Endothelial cell of umbilical vein (primary cell): ENCODE measurements at regions of chr1 and their contacts with region 1.

Region 1: GRCh38 chr1:108643492-108644335 is 17.2 kb downstream of the HENMT1 start:
- DNase-seq: peak; percentile 78
- H3K4me3 ChIP-seq: no peak overlapping the region
- H3K27ac ChIP-seq: no peak overlapping the region
- H3K4me1 ChIP-seq: no peaks in the 10 kb centered on the region
- H3K27me3 ChIP-seq: no peaks in the 10 kb centered on the region
- CTCF ChIP-seq: peak; percentile 29 to 36
- POLR2A ChIP-seq: no peak

Region 2: DNA sequence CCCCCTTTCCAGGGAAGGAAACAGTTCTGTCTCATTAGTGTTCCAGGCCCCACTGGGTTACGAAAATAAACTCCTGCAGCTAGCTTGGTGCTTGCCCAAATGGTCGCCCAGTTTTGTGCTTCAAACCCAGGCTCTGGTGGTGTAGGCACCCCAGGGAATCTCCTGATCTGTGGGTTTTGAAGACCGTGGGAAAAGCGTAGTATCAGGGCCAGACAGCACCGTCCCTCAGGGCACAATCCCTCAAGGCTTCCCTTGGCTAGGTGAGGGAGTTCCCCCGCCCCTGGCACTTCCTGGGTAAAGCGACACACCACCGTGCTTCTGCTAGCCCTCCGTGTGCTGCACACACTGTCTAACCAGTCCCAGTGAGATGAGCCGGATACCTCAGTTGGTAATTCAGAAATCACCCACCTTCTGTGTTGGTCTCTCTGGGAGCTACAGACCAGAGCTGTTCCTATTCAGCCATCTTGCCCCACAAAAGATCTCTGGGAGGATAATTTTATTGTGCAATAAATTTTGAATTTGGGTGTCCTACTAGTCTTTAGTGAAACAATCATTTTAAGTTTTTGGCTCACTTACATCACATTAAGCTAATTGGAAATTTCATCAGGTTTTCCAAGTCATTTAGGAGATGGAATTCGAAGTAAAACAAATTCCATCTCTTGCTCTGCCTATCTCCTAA is 434.1 kb before region 1 on chr1:
- CTCF ChIA-PET with region 1: interaction called, 10 read pairs
- POLR2A ChIA-PET with region 1: no interaction called
- dilution Hi-C with region 1: no loop called
- intact Hi-C with region 1: no loop called
- DNase-seq: no peak
- H3K4me3 ChIP-seq: no peak overlapping the region
- H3K27ac ChIP-seq: no peak overlapping the region
- H3K4me1 ChIP-seq: peaks cover 3% of the 10 kb centered on the region
- H3K27me3 ChIP-seq: peaks cover 6 to 20% of the 10 kb centered on the region in 2 experiments
- CTCF ChIP-seq: no peak
- POLR2A ChIP-seq: no peak

Region 3: DNA sequence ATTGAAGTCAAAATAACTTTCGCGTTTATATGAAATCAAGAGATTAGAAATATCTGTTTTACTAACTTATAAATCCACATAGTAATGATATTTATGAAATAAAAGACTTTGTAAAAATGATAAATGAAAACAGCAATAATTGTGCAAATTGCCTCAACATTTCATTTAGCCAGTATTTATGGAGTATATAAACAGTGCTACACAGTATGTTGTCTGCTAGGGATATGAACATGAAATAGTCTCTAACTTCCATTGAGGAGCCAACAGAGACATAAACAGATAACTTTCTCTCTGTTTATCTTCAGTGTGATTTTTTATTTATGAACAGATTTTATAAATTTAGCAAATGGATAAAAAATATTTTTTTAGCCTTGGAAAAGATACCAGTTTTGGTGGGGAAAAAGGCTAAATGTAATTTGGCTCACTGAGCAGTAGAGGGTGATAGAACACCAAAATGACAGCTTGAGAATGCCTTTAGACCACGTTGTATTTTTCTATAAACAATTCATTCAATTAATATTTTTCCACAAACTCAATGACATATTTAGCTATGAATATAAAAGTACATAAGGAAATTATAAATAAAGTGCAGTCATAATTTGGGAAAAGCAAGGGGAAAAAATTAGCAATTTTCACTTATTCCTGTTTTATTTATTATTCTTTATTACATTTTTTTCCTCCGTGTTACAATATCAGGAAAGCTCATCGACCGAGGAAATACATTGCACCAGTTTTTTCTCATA is 131.3 kb before region 1 on chr1:
- CTCF ChIA-PET with region 1: interaction called, 340 read pairs
- POLR2A ChIA-PET with region 1: no interaction called
- dilution Hi-C with region 1: no loop called
- intact Hi-C with region 1: loop called (anchors 1 kb)
- DNase-seq: peak; percentile 39
- H3K4me3 ChIP-seq: no peak overlapping the region
- H3K27ac ChIP-seq: no peak overlapping the region
- H3K4me1 ChIP-seq: no peaks in the 10 kb centered on the region
- H3K27me3 ChIP-seq: peaks cover 2 to 9% of the 10 kb centered on the region in 2 experiments
- CTCF ChIP-seq: peak; percentile 43 to 53
- POLR2A ChIP-seq: no peak

Region 4: DNA sequence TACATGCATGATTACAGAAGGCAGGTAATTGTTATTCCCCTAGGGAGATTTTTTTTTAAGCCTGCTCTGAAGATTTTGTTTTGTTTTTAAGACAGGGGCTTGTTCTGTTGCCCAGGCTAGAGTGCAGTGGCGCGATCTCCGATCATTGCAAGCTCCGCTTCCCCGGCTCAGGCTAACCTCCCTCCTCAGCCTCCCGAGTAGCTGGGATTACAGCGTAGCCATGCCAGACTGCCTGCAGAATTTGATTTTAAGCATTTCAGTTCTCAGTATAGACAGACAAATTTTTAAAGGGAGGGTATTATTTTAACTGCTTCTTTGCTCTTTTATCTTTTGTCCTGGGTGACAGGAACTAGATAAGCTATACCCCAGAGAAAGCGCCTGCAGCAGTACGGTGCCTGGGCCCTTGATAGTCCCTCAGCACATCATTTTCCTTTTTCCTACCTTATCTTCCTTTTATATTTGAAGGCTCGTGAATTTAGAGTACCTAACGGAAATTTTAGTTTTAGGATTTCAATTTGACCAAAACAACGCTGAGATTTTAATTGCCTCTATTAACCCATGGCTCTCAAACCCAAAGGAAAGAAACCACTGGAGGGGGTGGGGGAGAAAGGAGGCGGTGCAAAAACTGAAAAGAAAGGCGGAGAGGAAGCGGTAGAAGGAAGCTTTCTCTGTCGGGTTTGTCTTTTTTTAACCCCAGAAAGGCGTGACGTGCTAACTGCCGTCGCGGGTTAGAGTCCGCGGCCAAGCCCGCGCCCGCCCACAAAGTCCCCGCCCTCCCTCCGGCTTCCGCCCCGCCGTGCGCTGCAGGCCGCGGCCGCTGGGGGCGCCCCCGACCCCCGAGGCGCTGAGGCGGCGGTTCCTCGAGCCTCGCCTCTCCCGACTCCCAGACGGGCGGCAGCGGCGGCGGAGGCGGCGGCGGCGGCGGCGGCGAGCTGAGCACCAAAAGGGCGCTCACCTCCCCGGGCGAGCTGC is 84.2 kb before region 1 on chr1 and contains the start of gene EEIG2:
- CTCF ChIA-PET with region 1: interaction called, 106 read pairs
- POLR2A ChIA-PET with region 1: no interaction called
- dilution Hi-C with region 1: no loop called
- intact Hi-C with region 1: loop called (anchors 1 kb)
- DNase-seq: peak; percentile 88
- H3K4me3 ChIP-seq: peak within 1 kb of the TSS; percentile 45 to 76 (median 53)
- H3K27ac ChIP-seq: peak within 1 kb of the TSS; percentile 33
- H3K4me1 ChIP-seq: peaks cover 25% of the 10 kb centered on the region
- H3K27me3 ChIP-seq: peaks cover 3 to 11% of the 10 kb centered on the region in 2 experiments
- CTCF ChIP-seq: peak; percentile 64 to 78
- POLR2A ChIP-seq: peak; percentile 41
- total RNA-seq, gene EEIG2: 7.2 and 8.7 TPM in 2 replicates

Region 5: DNA sequence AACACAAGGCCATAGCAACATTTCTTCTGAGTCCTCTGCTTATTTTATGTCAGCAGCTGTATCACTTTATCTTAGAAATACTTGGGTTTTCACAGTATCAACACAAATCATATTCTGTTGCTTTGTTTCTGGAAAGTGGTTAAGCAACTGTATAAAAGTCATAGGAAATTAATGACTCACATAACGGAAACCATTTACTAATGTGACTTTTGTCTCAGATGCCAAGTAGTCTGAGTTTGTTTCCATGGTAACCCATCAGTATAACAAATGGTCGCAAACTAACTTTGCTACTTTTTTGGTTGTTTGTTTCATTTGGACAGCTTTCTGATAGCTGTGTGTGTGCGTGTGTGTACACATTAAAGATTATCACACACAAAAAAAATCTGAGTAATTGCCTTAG is 52.8 kb before region 1 on chr1:
- CTCF ChIA-PET with region 1: interaction called, 17 read pairs
- POLR2A ChIA-PET with region 1: no interaction called
- dilution Hi-C with region 1: no loop called
- intact Hi-C with region 1: loop called (anchors 5 kb)
- DNase-seq: peak; percentile 97
- H3K4me3 ChIP-seq: peak overlapping the region in 1 of 3 experiments; percentile 31
- H3K27ac ChIP-seq: peak overlapping the region; percentile 94
- H3K4me1 ChIP-seq: peaks cover 39% of the 10 kb centered on the region
- H3K27me3 ChIP-seq: no peaks in the 10 kb centered on the region
- CTCF ChIP-seq: no peak
- POLR2A ChIP-seq: no peak

Region 6: DNA sequence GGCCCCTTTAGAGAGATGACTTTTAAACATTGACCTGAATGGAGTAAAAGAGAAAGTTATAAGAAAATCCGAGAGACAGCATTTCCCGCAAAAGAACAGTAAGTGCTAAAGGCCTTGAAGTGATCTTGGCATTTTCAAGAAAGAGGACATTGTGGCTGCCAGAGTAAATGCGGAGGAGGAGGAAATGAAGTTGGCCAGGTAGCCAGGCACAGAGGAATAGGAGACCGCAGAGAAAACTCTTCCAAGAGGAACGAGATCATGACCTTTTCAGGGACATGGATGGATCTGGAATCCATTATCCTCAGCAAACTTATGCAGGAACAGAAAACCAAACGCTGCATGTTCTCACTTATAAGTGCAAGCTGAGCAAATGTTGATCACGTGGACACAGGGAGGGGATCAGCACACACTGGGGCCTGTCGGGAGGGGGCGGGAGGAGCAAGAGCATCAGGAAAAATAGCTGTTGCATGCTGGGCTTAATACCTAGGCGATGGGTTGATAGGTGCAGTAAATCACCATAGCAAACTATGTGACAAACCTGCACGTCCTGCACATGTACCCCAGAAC is 34.1 kb before region 1 on chr1:
- CTCF ChIA-PET with region 1: no interaction called
- POLR2A ChIA-PET with region 1: no interaction called
- dilution Hi-C with region 1: no loop called
- intact Hi-C with region 1: no loop called
- DNase-seq: no peak
- H3K4me3 ChIP-seq: no peak overlapping the region
- H3K27ac ChIP-seq: no peak overlapping the region
- H3K4me1 ChIP-seq: peaks cover 4% of the 10 kb centered on the region
- H3K27me3 ChIP-seq: no peaks in the 10 kb centered on the region
- CTCF ChIP-seq: no peak
- POLR2A ChIP-seq: no peak

Region 7: DNA sequence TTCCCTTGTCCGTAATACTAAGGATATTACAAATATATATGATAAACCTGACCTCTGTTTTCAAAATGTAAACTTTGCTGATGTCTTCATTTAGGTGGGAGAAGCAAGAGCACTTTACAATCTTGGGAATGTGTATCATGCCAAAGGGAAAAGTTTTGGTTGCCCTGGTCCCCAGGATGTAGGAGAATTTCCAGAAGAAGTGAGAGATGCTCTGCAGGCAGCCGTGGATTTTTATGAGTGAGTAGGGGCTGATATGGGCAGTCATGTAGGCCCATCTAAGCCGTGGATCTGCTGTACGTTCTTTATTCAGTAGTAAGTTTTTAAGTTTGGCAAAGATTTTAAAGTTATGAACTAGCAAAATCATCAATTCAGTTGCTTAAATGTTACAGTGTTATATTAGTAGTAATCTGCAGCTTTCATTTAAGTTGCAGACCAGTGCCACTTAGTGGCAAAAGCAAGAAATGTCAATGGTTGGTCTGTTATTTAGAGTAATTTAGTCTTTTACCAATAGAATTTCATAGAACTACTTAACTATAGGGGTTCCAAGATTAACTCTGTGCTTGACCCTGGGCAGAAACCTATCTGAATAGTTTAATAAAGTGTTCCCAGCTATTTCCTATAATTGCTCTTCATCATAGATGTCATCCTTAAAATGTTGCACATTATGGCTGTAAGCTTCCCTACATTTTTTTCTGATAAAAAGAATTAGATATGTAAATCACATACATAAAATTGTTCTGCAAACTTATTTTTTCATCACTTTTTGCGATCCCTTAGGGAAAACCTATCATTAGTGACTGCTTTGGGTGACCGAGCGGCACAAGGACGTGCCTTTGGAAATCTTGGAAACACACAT is 254.4 kb after region 1 on chr1:
- CTCF ChIA-PET with region 1: interaction called, 17 read pairs
- POLR2A ChIA-PET with region 1: no interaction called
- dilution Hi-C with region 1: no loop called
- intact Hi-C with region 1: loop called (anchors 5 kb)
- DNase-seq: peak; percentile 66
- H3K4me3 ChIP-seq: no peak overlapping the region
- H3K27ac ChIP-seq: no peak overlapping the region
- H3K4me1 ChIP-seq: peaks cover 4% of the 10 kb centered on the region
- H3K27me3 ChIP-seq: no peaks in the 10 kb centered on the region
- CTCF ChIP-seq: peak; percentile 36 to 45
- POLR2A ChIP-seq: no peak